ENCODE measurements at regions of chr6 and their contacts with region 1.

Region 1: GRCh38 chr6:27518881-27519795 is 46.2 kb upstream of the ZNF184 start:
- DNase-seq: peak in 1 of 2 donors; percentile 77
- H3K4me3 ChIP-seq: peak overlapping the region; percentile 76 to 86
- H3K27ac ChIP-seq: peak overlapping the region; percentile 90 to 94
- H3K4me1 ChIP-seq: peaks cover 0 to 8% of the 10 kb centered on the region in 2 donors
- H3K27me3 ChIP-seq: no peaks in the 10 kb centered on the region
- CTCF ChIP-seq: peak; percentile 31 to 78 (median 71)

Region 2: GRCh38 chr6:26087284-26088115 is 1431.6 kb before region 1 on chr6 and contains the start of gene HFE:
- intact Hi-C with region 1: no loop called
- DNase-seq: peak in 1 of 2 donors; percentile 72
- H3K4me3 ChIP-seq: peak within 1 kb of the TSS; percentile 65 to 82
- H3K27ac ChIP-seq: peak within 1 kb of the TSS; percentile 86 to 89
- H3K4me1 ChIP-seq: peaks cover 6 to 9% of the 10 kb centered on the region in 2 donors
- H3K27me3 ChIP-seq: no peaks in the 10 kb centered on the region
- CTCF ChIP-seq: no peak
- total RNA-seq, gene HFE: 2.6 TPM

Region 3: GRCh38 chr6:27188885-27189418 is 330.2 kb before region 1 on chr6:
- intact Hi-C with region 1: loop called (anchors 2 kb)
- DNase-seq: peak in 1 of 2 donors; percentile 76
- H3K4me3 ChIP-seq: peak overlapping the region; percentile 75 to 78
- H3K27ac ChIP-seq: peak overlapping the region; percentile 85 to 90
- H3K4me1 ChIP-seq: peaks cover 0 to 2% of the 10 kb centered on the region in 2 donors
- H3K27me3 ChIP-seq: no peaks in the 10 kb centered on the region
- CTCF ChIP-seq: peak; percentile 63 to 82 (median 71)

Region 4: DNA sequence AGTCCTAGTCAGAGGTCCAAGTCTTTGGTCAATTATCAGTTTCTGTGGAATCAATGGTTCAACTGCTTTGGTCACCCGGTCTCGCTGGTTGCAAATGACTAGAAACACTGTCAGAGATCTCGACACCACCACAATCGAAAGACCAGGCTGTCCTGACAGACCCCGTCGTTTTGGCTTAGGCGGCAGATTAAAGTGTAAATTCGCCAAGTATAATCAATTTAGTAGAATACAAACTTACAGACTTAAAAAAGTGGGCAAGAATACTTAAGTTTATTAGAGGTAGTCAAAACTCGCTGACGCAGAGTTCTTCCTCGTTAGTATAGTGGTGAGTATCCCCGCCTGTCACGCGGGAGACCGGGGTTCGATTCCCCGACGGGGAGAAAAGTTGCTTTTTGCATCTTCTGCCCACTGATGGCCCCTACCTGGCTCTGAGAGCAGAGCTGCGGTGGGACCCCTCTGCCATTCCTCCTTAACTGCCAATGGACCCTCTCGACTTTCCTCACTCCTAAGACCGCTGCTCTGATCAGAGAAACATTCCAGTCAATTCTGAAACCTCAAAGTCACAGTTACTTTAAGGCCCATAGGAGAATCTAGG is 15.6 kb before region 1 on chr6:
- intact Hi-C with region 1: loop called (anchors 2 kb)
- DNase-seq: peak in 1 of 2 donors; percentile 78
- H3K4me3 ChIP-seq: peak overlapping the region; percentile 49 to 59
- H3K27ac ChIP-seq: peak overlapping the region in 1 of 2 donors; percentile 31
- H3K4me1 ChIP-seq: no peaks in the 10 kb centered on the region
- H3K27me3 ChIP-seq: no peaks in the 10 kb centered on the region
- CTCF ChIP-seq: no peak

Region 5: DNA sequence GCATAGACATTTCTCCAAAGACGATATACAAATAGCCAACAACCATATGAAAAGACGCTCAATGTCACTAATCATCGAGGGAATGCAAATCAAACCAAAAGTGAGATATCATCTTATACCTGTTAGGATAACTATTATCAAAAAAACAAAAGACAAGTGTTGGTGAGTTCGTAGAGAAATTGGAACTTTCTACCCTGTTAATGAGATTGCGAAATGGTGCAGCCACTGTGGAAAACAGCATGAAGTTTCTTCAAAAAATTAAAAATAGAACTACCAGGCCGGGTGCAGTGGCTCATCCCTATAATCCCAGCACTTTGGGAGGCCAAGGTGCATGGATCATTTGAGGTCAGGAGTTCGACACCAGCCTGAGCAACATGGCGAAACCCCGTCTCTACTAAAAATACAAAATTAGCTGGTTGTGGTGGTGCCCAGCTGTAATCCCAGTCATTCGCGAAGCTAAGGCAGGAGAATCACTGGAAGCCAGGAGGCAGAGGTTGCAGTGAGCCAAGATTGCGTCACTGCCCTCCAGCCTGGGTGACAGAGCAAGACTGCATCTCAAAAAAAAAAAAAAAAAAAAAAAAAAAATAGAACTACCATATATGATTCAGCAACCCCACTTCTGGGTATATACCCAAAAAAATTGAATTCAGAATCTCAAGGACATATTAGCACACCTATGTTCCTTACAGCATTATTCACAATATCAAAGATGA is 123.8 kb after region 1 on chr6:
- intact Hi-C with region 1: no loop called
- DNase-seq: no peak
- H3K4me3 ChIP-seq: no peak overlapping the region
- H3K27ac ChIP-seq: no peak overlapping the region
- H3K4me1 ChIP-seq: no peaks in the 10 kb centered on the region
- H3K27me3 ChIP-seq: no peaks in the 10 kb centered on the region
- CTCF ChIP-seq: no peak

Measured in ascending aorta (tissue), 2 donors.